Psoas muscle (tissue), 8 donors: ENCODE measurements at regions of chr9 and their contacts with region 1.

Region 1: DNA sequence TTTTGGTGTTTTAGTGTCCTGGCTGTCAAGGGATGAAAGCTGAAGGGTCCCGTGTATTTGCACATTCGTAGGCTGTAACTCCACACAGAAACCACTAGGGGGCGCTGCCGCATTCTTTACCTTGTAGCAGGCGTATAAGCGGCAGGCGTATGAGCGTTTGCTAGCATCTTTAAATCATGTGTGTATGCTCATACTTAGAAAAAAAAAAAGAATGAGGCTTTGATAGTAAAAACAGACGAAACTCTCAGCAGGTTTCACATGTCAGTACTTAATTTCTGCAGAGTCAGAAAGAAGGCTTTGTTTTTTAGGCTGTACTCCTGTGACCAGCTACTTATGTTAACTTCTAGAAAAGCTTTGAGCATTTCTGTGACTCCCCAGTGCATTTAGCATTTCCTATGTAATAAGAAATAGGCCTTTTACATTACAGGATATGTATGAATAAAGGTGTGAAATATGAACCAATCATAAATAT is 218.8 kb upstream of the ADAMTSL1 start:
- DNase-seq: peak; percentile 73 to 80
- ATAC-seq: peak; percentile 63 to 83 (median 70)
- H3K4me3 ChIP-seq: no peak overlapping the region
- H3K27ac ChIP-seq: no peak overlapping the region
- H3K4me1 ChIP-seq: no peaks in the 10 kb centered on the region
- H3K27me3 ChIP-seq: no peaks in the 10 kb centered on the region
- CTCF ChIP-seq: peak; percentile 93

Region 2: DNA sequence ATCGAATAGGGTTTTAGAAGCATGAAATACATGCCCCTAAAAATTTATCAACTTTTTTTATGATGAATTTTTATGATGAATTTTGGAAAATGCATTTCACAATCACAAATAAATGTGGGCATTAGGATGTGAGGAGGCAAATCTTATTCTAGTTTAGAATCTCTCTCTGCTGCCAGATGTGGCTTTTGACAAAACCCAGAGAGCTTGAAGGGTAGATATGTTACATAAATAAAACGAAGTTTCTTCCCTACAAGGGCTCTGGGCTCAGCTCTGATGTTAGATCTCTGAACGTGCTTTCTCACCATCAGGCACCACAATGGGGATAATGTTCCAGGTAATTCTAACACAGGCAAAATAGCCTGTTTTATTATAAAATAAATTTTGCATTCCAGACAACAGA is 116.4 kb after region 1 on chr9:
- intact Hi-C with region 1: no loop called
- DNase-seq: no peak
- ATAC-seq: no peak
- H3K4me3 ChIP-seq: no peak overlapping the region
- H3K27ac ChIP-seq: no peak overlapping the region
- H3K4me1 ChIP-seq: no peaks in the 10 kb centered on the region
- H3K27me3 ChIP-seq: no peaks in the 10 kb centered on the region
- CTCF ChIP-seq: no peak

Region 3: DNA sequence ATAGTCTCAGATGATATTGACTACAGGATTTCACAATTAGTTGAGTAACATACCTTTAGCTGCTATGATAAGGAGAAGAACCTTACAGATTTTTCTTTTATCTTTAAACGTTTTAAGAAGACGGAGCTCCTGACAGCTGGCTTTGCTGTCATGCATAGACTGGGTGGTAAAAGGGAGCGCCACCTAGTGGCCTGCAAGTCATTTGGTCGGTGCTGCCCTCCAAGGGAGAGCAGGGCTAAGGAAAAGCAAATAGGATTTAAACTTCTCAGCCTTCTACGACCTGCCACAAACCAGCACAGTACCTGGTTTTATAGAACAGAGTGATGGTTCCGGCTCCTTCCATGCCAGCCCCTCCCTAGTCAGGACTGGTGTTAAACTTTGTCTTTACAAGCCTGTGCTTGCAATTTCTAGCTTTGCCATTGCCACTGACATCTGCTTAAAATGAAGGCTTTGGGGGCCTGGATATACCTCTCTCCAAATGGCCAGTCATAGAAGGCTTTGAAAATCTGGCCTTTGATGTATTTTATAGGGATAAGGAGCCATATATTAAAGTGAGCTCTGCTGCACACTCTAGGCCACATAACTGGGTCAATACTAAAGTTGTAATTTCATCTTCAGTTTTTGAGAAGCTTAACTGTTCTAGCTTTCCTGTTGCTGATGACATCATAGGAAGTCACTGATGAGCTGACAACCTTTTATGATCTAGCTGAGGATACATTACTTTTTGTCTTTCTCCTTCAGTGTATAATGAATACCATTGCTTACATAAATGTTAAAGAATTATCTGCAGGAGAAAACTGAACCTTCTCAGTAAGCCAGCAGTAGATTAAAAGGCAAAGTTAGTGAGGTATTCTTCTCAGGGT is 187.7 kb after region 1 on chr9:
- intact Hi-C with region 1: loop called (anchors 2 to 5 kb)
- DNase-seq: peak; percentile 64 to 70
- ATAC-seq: peak; percentile 76 to 87 (median 82)
- H3K4me3 ChIP-seq: no peak overlapping the region
- H3K27ac ChIP-seq: no peak overlapping the region
- H3K4me1 ChIP-seq: no peaks in the 10 kb centered on the region
- H3K27me3 ChIP-seq: no peaks in the 10 kb centered on the region
- CTCF ChIP-seq: peak; percentile 89

Region 4: GRCh38 chr9:18811171-18811570 is 556.0 kb after region 1 on chr9:
- intact Hi-C with region 1: loop called in 1 of 2 experiments (anchors 10 kb)
- DNase-seq: no peak
- ATAC-seq: no peak
- H3K4me3 ChIP-seq: no peak overlapping the region
- H3K27ac ChIP-seq: no peak overlapping the region
- H3K4me1 ChIP-seq: no peaks in the 10 kb centered on the region
- H3K27me3 ChIP-seq: no peaks in the 10 kb centered on the region
- CTCF ChIP-seq: no peak

Region 5: DNA sequence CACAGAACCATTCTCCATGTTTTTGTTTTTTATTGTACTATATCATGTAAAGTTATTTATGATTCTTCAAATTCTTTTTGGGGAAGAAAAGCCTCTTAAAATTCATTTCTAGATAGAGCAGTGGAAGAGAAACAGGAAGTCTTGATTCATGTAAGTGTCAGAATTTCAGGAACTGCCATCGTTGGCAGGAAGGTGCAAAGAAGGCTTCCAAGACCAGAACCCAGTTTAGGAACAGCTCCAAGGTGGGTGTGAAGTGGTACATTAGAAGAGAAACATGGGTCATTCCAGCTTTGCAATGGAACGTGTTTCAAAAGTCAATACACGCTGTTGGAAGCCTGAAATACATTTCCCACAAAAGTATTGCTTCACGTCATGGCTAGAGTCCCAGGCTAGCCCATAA is 763.0 kb after region 1 on chr9:
- intact Hi-C with region 1: loop called in 1 of 2 experiments (anchors 5 kb)
- DNase-seq: no peak
- ATAC-seq: no peak
- H3K4me3 ChIP-seq: no peak overlapping the region
- H3K27ac ChIP-seq: no peak overlapping the region
- H3K4me1 ChIP-seq: no peaks in the 10 kb centered on the region
- H3K27me3 ChIP-seq: peaks cover 0 to 3% (median 2%) of the 10 kb centered on the region in 3 donors
- CTCF ChIP-seq: no peak

Region 6: DNA sequence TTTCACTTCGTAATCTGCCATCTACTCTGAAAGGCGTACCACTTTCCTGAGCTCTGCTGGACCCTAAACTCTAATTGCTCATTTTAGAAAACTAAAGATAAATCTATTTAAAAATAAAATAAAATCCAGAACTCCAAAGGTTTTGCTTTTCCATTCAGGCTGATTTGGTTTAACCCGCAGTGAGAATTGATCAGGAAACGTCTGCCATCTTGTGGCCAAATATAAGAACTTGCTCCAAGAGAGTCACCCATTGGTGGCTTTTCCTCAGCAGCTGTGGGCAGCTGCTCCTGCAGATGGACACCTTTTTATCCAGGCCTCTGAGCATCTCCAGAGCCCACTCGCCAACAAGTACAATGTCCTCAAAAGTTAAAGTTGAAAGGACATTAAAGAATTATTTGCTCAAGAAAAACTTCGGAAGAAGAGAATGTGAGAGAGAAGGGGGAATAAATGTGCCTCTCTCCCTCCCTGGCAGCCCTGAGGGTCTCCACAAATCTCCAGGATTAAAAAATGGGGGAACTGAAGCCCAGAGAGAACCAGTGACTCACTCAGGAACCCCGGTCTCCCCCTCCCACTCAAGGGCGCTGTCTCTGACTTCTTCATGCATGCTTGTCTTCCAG is 773.7 kb after region 1 on chr9:
- intact Hi-C with region 1: loop called (anchors 2 to 5 kb)
- DNase-seq: no peak
- ATAC-seq: peak in 3 of 4 donors; percentile 62 to 84 (median 64)
- H3K4me3 ChIP-seq: no peak overlapping the region
- H3K27ac ChIP-seq: no peak overlapping the region
- H3K4me1 ChIP-seq: no peaks in the 10 kb centered on the region
- H3K27me3 ChIP-seq: peaks cover 0 to 3% (median 0%) of the 10 kb centered on the region in 3 donors
- CTCF ChIP-seq: peak; percentile 77

Region 7: GRCh38 chr9:19456996-19457692 is 1202.0 kb after region 1 on chr9:
- intact Hi-C with region 1: loop called in 1 of 2 experiments (anchors 10 kb)
- DNase-seq: peak; percentile 37 to 61
- ATAC-seq: peak; percentile 89 to 100 (median 96)
- H3K4me3 ChIP-seq: peak overlapping the region; percentile 25
- H3K27ac ChIP-seq: no peak overlapping the region
- H3K4me1 ChIP-seq: peaks cover 8% of the 10 kb centered on the region
- H3K27me3 ChIP-seq: no peaks in the 10 kb centered on the region
- CTCF ChIP-seq: peak; percentile 98